ENCODE measurements at regions of chrX and their contacts with region 1.

Region 1: DNA sequence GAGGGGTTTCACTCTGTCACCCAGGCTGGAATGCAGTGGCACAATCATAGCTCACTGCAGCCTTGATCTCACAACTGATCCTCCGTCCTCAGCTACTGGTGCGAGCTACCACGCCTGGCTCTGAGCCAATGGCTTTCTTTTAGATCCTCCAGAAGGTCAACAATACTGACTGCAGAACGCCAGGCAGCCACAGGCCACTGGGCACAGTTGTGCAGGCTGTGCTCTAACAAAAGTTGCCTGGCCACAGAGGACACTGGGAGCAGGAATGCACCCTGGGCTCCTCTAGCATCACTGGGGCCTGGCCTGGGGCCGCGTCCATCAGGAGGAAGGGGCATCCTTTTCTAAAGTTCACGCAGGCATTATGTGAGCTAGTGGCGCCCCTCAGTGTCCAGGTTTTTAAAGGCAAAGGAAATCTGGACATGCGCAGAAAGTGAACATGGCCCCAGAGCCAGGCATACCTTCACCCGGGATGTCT is 14.9 kb upstream of the PORCN start:
- DNase-seq: peak; percentile 57
- ATAC-seq: peak; percentile 93
- H3K4me3 Mint-ChIP-seq: no peak overlapping the region
- H3K27ac Mint-ChIP-seq: no peak overlapping the region
- H3K4me1 Mint-ChIP-seq: no peaks in the 10 kb centered on the region
- H3K27me3 Mint-ChIP-seq: no peaks in the 10 kb centered on the region
- CTCF ChIP-seq: no peak

Region 2: GRCh38 chrX:48083212-48083611 is 410.7 kb before region 1 on chrX:
- CTCF ChIA-PET with region 1: interaction called, 35 read pairs
- POLR2A ChIA-PET with region 1: no interaction called
- DNase-seq: peak; percentile 41
- ATAC-seq: peak; percentile 95
- H3K4me3 Mint-ChIP-seq: no peak overlapping the region
- H3K27ac Mint-ChIP-seq: no peak overlapping the region
- H3K4me1 Mint-ChIP-seq: peaks cover 5% of the 10 kb centered on the region
- H3K27me3 Mint-ChIP-seq: 0 out of 2 replicates have a peak, but pooled peaks cover 3% of the 10 kb centered on the region
- CTCF ChIP-seq: no peak

Region 3: GRCh38 chrX:48468693-48469691 is 24.9 kb before region 1 on chrX:
- CTCF ChIA-PET with region 1: interaction called, 16 read pairs
- POLR2A ChIA-PET with region 1: no interaction called
- DNase-seq: peak; percentile 48
- ATAC-seq: peak; percentile 37
- H3K4me3 Mint-ChIP-seq: peak overlapping the region; percentile 91
- H3K27ac Mint-ChIP-seq: peak overlapping the region; percentile 51; the same call in 1 of the 2 replicates
- H3K4me1 Mint-ChIP-seq: peaks cover 43% of the 10 kb centered on the region
- H3K27me3 Mint-ChIP-seq: no peaks in the 10 kb centered on the region
- CTCF ChIP-seq: no peak

Region 4: GRCh38 chrX:48474127-48474526 is 19.8 kb before region 1 on chrX:
- CTCF ChIA-PET with region 1: interaction called, 16 read pairs
- POLR2A ChIA-PET with region 1: no interaction called
- DNase-seq: peak; percentile 16
- ATAC-seq: peak; percentile 9
- H3K4me3 Mint-ChIP-seq: peak overlapping the region; percentile 44
- H3K27ac Mint-ChIP-seq: peak overlapping the region; percentile 95
- H3K4me1 Mint-ChIP-seq: peaks cover 45% of the 10 kb centered on the region
- H3K27me3 Mint-ChIP-seq: no peaks in the 10 kb centered on the region
- CTCF ChIP-seq: no peak

Measured in WTC11 (cell line).